ENCODE measurements at regions of chr10 and their contacts with region 1.

Region 1: GRCh38 chr10:4656576-4657182 is 169.3 kb upstream of the AKR1E2 start:
- DNase-seq: peak in 8 of 9 donors; percentile 16 to 50 (median 36)
- ATAC-seq: no peak
- H3K4me3 ChIP-seq: no peak overlapping the region
- H3K4me3 Mint-ChIP-seq: no peak overlapping the region
- H3K27ac ChIP-seq: no peak overlapping the region
- H3K27ac Mint-ChIP-seq: no peak overlapping the region
- H3K4me1 ChIP-seq: no peaks in the 10 kb centered on the region
- H3K4me1 Mint-ChIP-seq: peaks cover 0 to 11% (median 0%) of the 10 kb centered on the region in 7 donors
- H3K27me3 ChIP-seq: no peaks in the 10 kb centered on the region
- H3K27me3 Mint-ChIP-seq: peaks cover 4 to 30% (median 8%) of the 10 kb centered on the region in 5 donors

Region 2: DNA sequence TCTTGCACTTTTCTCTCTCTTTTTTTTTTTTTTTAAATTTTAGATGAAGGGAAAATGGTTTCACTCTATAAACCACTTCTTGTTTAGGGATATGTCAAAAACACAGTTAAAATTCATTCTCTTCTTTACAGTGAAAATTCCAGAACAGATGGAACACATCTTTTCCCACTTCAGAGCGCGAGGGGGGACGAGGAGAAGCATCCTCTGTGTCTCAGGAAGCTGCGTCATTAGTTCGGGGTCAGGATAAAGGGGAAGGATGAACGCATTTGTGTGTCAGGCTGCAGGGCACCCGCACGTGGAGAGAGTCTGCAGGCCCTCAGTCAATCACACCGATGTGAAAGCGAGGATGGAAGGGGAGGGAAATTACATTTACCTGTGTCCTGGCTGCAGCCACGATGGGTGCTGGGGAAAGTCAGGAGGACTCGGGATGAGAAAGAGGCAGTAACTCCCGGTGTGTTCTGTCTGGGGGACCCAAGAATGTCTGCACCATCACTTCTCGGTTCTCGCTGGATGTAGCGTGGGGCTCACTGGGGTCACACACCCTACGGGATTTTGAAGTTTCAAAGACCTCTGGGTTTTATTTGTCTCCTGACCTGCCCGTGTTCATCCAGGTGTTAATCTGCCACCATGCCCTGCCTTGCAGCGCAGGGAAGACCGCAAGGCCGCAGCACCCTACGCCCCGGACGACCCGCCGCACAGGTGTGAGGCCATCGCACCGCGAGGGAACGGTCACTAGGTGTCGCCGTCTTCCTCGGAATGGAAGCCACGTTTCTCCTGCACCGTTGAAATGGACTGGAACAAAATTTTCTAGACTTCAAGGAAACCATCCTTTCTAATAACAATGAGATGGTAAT is 1417.4 kb before region 1 on chr10:
- CTCF ChIA-PET with region 1: interaction called, 33 read pairs
- POLR2A ChIA-PET with region 1: no interaction called
- intact Hi-C with region 1: loop called (anchors 1 kb)
- DNase-seq: peak; percentile 23 to 72 (median 53)
- ATAC-seq: peak; percentile 78
- H3K4me3 ChIP-seq: no peak overlapping the region
- H3K4me3 Mint-ChIP-seq: peak overlapping the region in 2 of 10 donors; percentile 24 to 32
- H3K27ac ChIP-seq: no peak overlapping the region
- H3K27ac Mint-ChIP-seq: no peak overlapping the region
- H3K4me1 ChIP-seq: no peaks in the 10 kb centered on the region
- H3K4me1 Mint-ChIP-seq: peaks cover 0 to 8% (median 4%) of the 10 kb centered on the region in 7 donors
- H3K27me3 ChIP-seq: no peaks in the 10 kb centered on the region
- H3K27me3 Mint-ChIP-seq: peaks cover 0 to 33% (median 10%) of the 10 kb centered on the region in 5 donors

Region 3: GRCh38 chr10:3452173-3452626 is 1204.5 kb before region 1 on chr10:
- CTCF ChIA-PET with region 1: interaction called, 3 read pairs
- POLR2A ChIA-PET with region 1: no interaction called
- intact Hi-C with region 1: loop called in 1 of 2 experiments (anchors 1 kb)
- DNase-seq: peak in 6 of 9 donors; percentile 18 to 56 (median 24)
- ATAC-seq: no peak
- H3K4me3 ChIP-seq: no peak overlapping the region
- H3K4me3 Mint-ChIP-seq: peak overlapping the region in 1 of 10 donors; percentile 57
- H3K27ac ChIP-seq: peak overlapping the region; percentile 51
- H3K27ac Mint-ChIP-seq: peak overlapping the region in 8 of 9 donors; percentile 16 to 88 (median 78)
- H3K4me1 ChIP-seq: peaks cover 0 to 38% of the 10 kb centered on the region in 2 donors
- H3K4me1 Mint-ChIP-seq: peaks cover 7 to 48% (median 36%) of the 10 kb centered on the region in 7 donors
- H3K27me3 ChIP-seq: peaks cover 0 to 6% of the 10 kb centered on the region in 2 donors
- H3K27me3 Mint-ChIP-seq: peaks cover 0 to 32% (median 0%) of the 10 kb centered on the region in 5 donors

Region 4: GRCh38 chr10:3776796-3777571 is 879.7 kb before region 1 on chr10:
- CTCF ChIA-PET with region 1: no interaction called
- POLR2A ChIA-PET with region 1: no interaction called
- intact Hi-C with region 1: loop called (anchors 1 to 10 kb)
- DNase-seq: peak in 7 of 9 donors; percentile 41 to 84 (median 67)
- ATAC-seq: peak; percentile 31
- H3K4me3 ChIP-seq: no peak overlapping the region
- H3K4me3 Mint-ChIP-seq: peak overlapping the region in 9 of 10 donors; percentile 7 to 81 (median 51)
- H3K27ac ChIP-seq: peak overlapping the region; percentile 70
- H3K27ac Mint-ChIP-seq: peak overlapping the region; percentile 59 to 99 (median 83)
- H3K4me1 ChIP-seq: peaks cover 53 to 71% of the 10 kb centered on the region in 2 donors
- H3K4me1 Mint-ChIP-seq: peaks cover 50 to 66% (median 64%) of the 10 kb centered on the region in 7 donors
- H3K27me3 ChIP-seq: no peaks in the 10 kb centered on the region
- H3K27me3 Mint-ChIP-seq: no peaks in the 10 kb centered on the region

Region 5: DNA sequence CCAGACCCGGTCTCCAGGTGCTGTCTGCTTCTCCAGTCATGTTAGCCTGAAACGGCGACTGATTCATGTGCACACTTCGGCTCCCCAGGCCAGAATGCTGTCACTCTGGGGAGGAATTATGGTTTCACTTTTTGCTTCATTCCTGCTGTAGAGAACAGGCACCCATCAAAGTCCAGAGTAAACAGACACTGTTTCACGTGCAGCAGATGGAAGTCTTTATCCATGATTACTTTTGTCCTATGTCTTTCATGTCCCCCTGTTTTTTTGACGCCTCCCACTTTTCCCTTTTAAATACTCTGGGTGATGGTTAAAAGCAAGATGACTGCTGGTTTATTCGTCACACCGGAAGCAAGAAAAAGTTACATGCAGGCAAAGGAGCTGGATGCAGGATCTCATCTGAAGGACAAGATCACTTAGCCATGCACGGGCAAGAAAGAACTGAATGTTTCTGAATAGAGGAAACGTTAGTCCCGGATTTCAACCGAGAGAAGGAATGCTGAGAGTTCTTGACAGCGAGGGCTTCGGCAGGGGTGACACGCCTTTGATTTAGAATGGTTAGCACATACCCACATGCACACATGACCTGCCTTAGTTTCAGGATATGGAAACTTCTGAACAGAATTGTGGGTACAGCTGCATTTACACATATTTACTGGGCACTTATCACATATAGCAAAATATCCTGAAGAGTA is 621.6 kb before region 1 on chr10:
- CTCF ChIA-PET with region 1: no interaction called
- POLR2A ChIA-PET with region 1: no interaction called
- intact Hi-C with region 1: loop called in 1 of 2 experiments (anchors 10 kb)
- DNase-seq: peak in 7 of 9 donors; percentile 6 to 41 (median 30)
- ATAC-seq: peak; percentile 78
- H3K4me3 ChIP-seq: peak overlapping the region; percentile 44
- H3K4me3 Mint-ChIP-seq: peak overlapping the region; percentile 73 to 91 (median 82)
- H3K27ac ChIP-seq: peak overlapping the region; percentile 22
- H3K27ac Mint-ChIP-seq: peak overlapping the region; percentile 67 to 91 (median 82)
- H3K4me1 ChIP-seq: peaks cover 4 to 11% of the 10 kb centered on the region in 2 donors
- H3K4me1 Mint-ChIP-seq: peaks cover 8 to 37% (median 17%) of the 10 kb centered on the region in 7 donors
- H3K27me3 ChIP-seq: no peaks in the 10 kb centered on the region
- H3K27me3 Mint-ChIP-seq: no peaks in the 10 kb centered on the region

Region 6: DNA sequence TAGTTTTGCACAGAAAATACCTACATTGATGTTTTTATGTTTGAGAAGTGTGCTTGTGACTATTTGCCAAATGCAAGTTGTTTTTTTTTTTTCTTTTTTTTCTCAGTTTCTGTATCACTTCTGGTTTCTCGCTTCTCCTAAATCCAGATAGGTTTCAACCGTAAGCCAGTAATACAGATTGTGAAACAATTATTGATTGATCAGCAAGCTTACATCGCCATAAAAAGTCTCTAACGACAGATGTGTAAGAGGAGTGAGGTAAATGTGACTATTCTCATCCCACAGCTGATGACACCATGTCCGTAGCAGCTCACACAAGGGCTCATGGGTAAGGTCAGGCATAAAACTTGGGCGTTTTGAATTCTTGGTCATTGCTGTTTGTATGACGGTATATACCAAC is 33.5 kb before region 1 on chr10:
- CTCF ChIA-PET with region 1: no interaction called
- POLR2A ChIA-PET with region 1: no interaction called
- intact Hi-C with region 1: no loop called
- DNase-seq: no peak
- ATAC-seq: no peak
- H3K4me3 ChIP-seq: no peak overlapping the region
- H3K4me3 Mint-ChIP-seq: no peak overlapping the region
- H3K27ac ChIP-seq: no peak overlapping the region
- H3K27ac Mint-ChIP-seq: no peak overlapping the region
- H3K4me1 ChIP-seq: no peaks in the 10 kb centered on the region
- H3K4me1 Mint-ChIP-seq: no peaks in the 10 kb centered on the region
- H3K27me3 ChIP-seq: no peaks in the 10 kb centered on the region
- H3K27me3 Mint-ChIP-seq: peaks cover 0 to 28% (median 18%) of the 10 kb centered on the region in 5 donors

Region 7: DNA sequence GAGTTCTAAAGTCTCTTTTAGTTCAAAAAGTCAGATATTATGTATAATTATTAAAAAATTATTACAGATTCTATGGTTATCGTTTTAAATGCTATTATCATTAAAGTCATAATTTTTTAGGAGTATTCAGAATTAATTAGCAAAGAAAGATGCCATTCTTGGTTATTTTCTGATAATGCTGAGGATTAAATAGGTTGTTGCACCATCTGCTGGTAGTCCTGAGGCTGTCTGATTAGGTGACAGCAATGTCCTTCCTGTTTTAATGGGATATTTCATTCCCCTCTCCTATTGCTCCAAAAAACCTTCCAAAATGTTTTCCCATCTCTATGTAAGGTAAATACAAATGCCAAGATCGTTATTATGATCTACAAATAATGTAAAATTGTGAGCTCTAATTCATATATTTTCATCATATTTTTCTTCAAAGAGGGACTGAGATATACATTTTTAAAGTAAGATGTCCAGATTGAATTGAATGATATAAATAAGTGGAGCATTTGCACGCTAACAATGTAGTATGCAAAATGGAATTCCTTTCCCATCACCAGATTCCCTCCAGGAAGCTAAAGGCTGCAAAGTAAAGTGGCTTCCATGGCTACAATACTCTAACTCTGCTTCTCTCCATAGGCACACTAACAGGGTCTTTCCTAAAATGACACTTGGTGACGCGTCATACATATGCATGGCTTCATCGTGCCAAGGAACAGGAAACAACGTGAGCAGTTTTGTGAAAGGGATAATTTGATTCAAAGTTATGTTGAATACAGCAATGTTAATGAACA is 110.5 kb after region 1 on chr10:
- CTCF ChIA-PET with region 1: no interaction called
- POLR2A ChIA-PET with region 1: no interaction called
- intact Hi-C with region 1: loop called in 1 of 2 experiments (anchors 5 kb)
- DNase-seq: peak in 2 of 9 donors; percentile 0 to 14
- ATAC-seq: no peak
- H3K4me3 ChIP-seq: no peak overlapping the region
- H3K4me3 Mint-ChIP-seq: no peak overlapping the region
- H3K27ac ChIP-seq: no peak overlapping the region
- H3K27ac Mint-ChIP-seq: no peak overlapping the region
- H3K4me1 ChIP-seq: no peaks in the 10 kb centered on the region
- H3K4me1 Mint-ChIP-seq: no peaks in the 10 kb centered on the region
- H3K27me3 ChIP-seq: peaks cover 0 to 3% of the 10 kb centered on the region in 2 donors
- H3K27me3 Mint-ChIP-seq: peaks cover 17 to 43% (median 32%) of the 10 kb centered on the region in 5 donors

Measured in naive thymus-derived CD4-positive, alpha-beta T cell (primary cell).